GM12878 (cell line): ENCODE measurements at regions of chr12 and their contacts with region 1.

Region 1: GRCh38 chr12:47651368-47652254 is 54.2 kb downstream of the RPAP3 start:
- DNase-seq: peak; percentile 23
- ATAC-seq: peak; percentile 96
- H3K4me3 ChIP-seq: no peak overlapping the region
- H3K27ac ChIP-seq: no peak overlapping the region
- H3K4me1 ChIP-seq: peaks cover 13% of the 10 kb centered on the region
- H3K27me3 ChIP-seq: no peaks in the 10 kb centered on the region
- CTCF ChIP-seq: peak; percentile 57 to 72 (median 67)
- EP300 ChIP-seq: no peak
- POLR2A ChIP-seq: no peak
- RAD21 ChIP-seq: peak; percentile 67

Region 2: GRCh38 chr12:47343677-47344567 is 307.7 kb before region 1 on chr12:
- CTCF ChIA-PET with region 1: no interaction called
- POLR2A ChIA-PET with region 1: no interaction called
- RAD21 ChIA-PET with region 1: no interaction called
- SMC1A ChIA-PET with region 1: no interaction called
- in situ Hi-C with region 1: no loop called
- intact Hi-C with region 1: no loop called
- DNase-seq: no peak
- ATAC-seq: no peak
- H3K4me3 ChIP-seq: no peak overlapping the region
- H3K27ac ChIP-seq: no peak overlapping the region
- H3K4me1 ChIP-seq: no peaks in the 10 kb centered on the region
- H3K27me3 ChIP-seq: no peaks in the 10 kb centered on the region; a peak in 1 of 4 replicates
- CTCF ChIP-seq: no peak
- EP300 ChIP-seq: no peak
- POLR2A ChIP-seq: no peak
- RAD21 ChIP-seq: no peak

Region 3: DNA sequence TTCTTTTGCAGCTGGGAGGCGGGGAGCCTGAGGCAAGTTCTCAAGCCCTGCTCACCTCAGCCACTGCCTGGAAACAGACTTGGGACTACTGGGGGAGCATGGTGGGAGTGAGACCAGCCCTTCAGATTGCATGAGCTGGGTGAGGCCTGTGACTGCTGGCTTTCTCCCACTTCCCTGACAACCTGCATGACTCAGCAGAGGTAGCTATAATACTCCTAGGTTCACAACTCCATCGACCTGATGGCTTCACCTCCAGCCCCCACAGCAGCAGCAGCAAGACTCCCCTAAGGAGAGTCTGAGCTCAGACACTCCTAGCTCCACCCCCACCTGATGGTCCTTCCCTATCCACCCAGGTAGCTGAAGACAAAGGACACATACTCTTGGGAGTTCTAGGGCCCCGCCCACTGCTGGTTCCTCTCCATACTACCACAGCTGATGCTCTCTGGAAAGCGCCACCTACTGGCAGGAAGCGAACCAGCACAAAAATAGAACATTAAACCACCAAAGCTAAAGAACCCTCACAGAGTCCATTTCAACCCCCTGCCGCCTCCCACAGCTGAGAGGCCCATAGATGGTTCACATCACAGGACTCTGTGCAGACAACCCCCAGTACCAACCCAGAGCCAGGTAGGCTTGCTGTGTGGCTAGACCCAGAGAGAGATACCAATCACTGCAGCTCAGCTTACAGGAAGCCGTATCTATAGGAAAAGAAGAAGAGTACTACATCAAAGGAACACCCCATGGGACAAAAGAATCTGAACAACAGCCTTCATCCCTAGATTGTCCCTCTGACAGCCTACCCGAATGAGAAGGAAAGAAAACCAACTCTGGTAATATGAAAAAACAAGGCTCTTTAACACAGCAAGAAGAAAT is 14.5 kb before region 1 on chr12:
- CTCF ChIA-PET with region 1: interaction called, 34 read pairs
- POLR2A ChIA-PET with region 1: no interaction called
- RAD21 ChIA-PET with region 1: no interaction called
- SMC1A ChIA-PET with region 1: no interaction called
- in situ Hi-C with region 1: no loop called
- intact Hi-C with region 1: no loop called
- DNase-seq: no peak
- ATAC-seq: no peak
- H3K4me3 ChIP-seq: no peak overlapping the region
- H3K27ac ChIP-seq: no peak overlapping the region
- H3K4me1 ChIP-seq: no peaks in the 10 kb centered on the region
- H3K27me3 ChIP-seq: no peaks in the 10 kb centered on the region
- CTCF ChIP-seq: peak; percentile 15 to 50 (median 47); a peak in 5 of 6 replicates
- EP300 ChIP-seq: no peak
- POLR2A ChIP-seq: no peak
- RAD21 ChIP-seq: 0 out of 2 replicates have a peak, but pooled peaks have one; percentile 7

Region 4: GRCh38 chr12:47672068-47672467 is 20.5 kb after region 1 on chr12:
- CTCF ChIA-PET with region 1: interaction called, 13 read pairs
- POLR2A ChIA-PET with region 1: no interaction called
- RAD21 ChIA-PET with region 1: no interaction called
- SMC1A ChIA-PET with region 1: interaction called, 8 read pairs
- in situ Hi-C with region 1: no loop called
- intact Hi-C with region 1: loop called (anchors 1 kb)
- DNase-seq: no peak
- ATAC-seq: no peak
- H3K4me3 ChIP-seq: no peak overlapping the region
- H3K27ac ChIP-seq: no peak overlapping the region
- H3K4me1 ChIP-seq: no peaks in the 10 kb centered on the region
- H3K27me3 ChIP-seq: no peaks in the 10 kb centered on the region
- CTCF ChIP-seq: no peak
- EP300 ChIP-seq: no peak
- POLR2A ChIP-seq: no peak
- RAD21 ChIP-seq: no peak

Region 5: GRCh38 chr12:47686645-47687240 is 35.1 kb after region 1 on chr12:
- CTCF ChIA-PET with region 1: interaction called, 65 read pairs
- POLR2A ChIA-PET with region 1: no interaction called
- RAD21 ChIA-PET with region 1: interaction called, 12 read pairs
- SMC1A ChIA-PET with region 1: interaction called, 23 read pairs
- in situ Hi-C with region 1: no loop called
- intact Hi-C with region 1: no loop called
- DNase-seq: no peak
- ATAC-seq: peak; percentile 66
- H3K4me3 ChIP-seq: no peak overlapping the region
- H3K27ac ChIP-seq: no peak overlapping the region
- H3K4me1 ChIP-seq: no peaks in the 10 kb centered on the region
- H3K27me3 ChIP-seq: no peaks in the 10 kb centered on the region
- CTCF ChIP-seq: peak; percentile 51 to 67 (median 56); a peak in 5 of 6 replicates
- EP300 ChIP-seq: no peak
- POLR2A ChIP-seq: no peak
- RAD21 ChIP-seq: peak; percentile 75

Region 6: DNA sequence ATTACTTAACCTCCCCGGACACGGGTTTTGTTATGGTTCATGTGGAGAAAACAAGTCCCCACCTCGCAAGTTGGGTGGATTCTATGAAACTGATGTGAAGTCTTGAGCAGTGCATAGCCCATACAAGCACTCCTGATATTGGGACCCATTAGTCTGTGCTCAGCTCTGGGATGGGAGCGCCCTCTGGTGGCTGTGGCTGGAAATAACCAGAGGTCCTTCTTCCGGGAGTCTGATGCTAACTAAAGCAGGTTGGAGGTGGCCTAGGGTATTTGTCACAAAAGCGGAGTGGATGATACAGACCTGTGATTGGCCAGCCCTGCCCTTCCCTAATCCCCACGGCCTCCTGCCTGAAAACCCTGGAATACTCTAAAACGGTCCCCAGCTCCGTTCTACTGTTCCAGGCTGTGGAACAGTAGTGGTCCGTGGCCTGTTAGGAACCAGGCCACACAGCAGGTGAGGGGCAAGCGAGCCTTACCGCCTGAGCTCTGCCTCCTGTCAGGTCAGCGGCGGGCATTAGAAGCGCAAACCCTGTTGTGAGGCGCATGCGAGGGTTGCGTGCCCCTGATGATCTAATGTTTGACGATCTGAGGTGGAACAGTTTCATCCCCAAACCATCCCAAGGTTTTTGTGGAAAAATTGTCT is 127.8 kb after region 1 on chr12:
- CTCF ChIA-PET with region 1: interaction called, 12 read pairs
- POLR2A ChIA-PET with region 1: no interaction called
- RAD21 ChIA-PET with region 1: interaction called, 9 read pairs
- SMC1A ChIA-PET with region 1: interaction called, 3 read pairs
- in situ Hi-C with region 1: loop called (anchors 5 kb)
- intact Hi-C with region 1: loop called (anchors 2 kb)
- DNase-seq: peak; percentile 53
- ATAC-seq: peak; percentile 95
- H3K4me3 ChIP-seq: no peak overlapping the region
- H3K27ac ChIP-seq: no peak overlapping the region
- H3K4me1 ChIP-seq: peaks cover 11% of the 10 kb centered on the region; the same call in 1 of the 2 replicates
- H3K27me3 ChIP-seq: no peaks in the 10 kb centered on the region
- CTCF ChIP-seq: peak; percentile 92 to 97 (median 95)
- EP300 ChIP-seq: no peak
- POLR2A ChIP-seq: no peak; the same call in none of the 2 replicates
- RAD21 ChIP-seq: peak; percentile 95